ENCODE measurements at regions of chr4 and their contacts with region 1.

Region 1: DNA sequence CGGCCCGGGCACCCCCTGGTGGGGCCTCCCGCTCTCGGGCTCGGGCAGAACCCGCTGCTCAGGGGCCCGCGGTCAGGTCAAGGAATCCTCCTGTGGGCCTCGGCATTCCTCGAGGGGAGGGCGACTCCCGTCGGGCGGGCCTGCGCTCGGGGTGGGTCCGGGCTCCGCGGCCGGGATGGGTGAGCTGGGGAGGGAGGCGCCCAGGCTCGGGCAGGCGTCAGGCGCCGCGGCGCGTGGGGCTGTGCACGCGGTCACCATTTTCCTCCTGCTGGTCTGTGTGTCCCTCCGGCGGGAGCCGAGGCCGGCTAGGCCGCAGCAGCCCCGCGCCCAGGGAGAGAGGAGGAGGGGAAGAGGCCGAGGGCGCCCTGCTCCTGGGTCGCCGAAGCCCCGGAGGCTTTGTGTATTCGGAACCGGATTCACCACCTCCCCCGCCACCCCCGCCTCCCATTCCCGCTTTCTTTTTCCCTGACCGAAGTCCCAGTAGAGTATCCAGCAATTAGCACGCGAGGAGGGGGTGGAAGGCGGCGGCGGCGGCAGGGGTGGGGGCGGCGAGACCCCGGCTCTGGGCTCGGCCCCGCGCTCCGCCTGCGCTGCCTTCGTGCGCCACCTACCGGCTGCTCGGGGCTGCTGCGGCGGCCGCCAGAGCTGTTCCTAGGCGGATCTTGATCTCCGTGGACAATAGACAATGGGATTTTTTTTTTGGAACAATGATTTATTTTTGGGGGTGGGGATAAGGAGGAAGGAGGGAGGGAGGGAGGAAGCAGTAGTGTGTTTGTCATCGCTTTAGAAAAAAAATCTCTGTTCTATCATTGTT is 99.0 kb upstream of the MAML3 start:
- DNase-seq: peak; percentile 63 to 77
- ATAC-seq: peak; percentile 78 to 86
- H3K4me3 ChIP-seq: peak overlapping the region; percentile 44
- H3K27ac ChIP-seq: peak overlapping the region; percentile 94 to 98
- H3K4me1 ChIP-seq: peaks cover 72% of the 10 kb centered on the region
- CTCF ChIP-seq: peak; percentile 85
- EP300 ChIP-seq: no peak
- POLR2A ChIP-seq: no peak
- RAD21 ChIP-seq: peak; percentile 78 to 96

Region 2: DNA sequence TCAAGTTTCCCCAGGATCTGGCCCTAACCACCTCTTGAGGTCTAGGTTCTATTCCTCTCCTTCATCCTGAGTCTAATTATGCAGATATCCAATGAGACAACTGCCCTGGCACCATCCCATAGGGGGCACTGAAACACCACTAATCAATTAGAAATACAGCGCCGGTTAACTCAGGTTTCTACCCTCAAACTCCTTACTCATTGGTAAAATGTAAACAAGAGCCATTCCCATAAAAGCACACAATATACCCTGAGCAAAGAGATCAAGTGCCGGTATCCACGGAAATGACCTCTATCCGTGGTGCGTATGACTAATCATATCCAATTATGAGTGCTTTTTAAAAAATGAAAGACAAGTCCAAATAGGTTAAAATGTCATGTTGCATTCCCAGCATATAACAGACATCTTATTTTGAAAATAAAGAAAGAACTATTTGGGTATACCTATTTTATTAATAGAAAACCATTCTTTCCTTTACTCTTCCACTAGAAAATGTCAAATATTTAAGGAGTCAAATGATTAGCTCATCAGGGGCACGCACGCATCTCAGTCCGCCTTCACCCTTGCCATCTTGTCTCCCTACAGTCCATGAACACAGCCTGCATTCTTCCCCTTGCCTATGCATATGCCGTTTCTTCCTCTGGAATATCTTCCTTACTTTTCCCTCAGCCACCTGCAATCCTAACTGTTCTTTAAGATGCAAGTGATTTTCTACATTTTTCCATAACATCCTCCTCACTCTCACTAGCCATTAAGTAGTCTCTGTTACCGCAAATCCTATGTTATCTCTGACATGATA is 240.1 kb before region 1 on chr4:
- CTCF ChIA-PET with region 1: interaction called, 40 read pairs
- POLR2A ChIA-PET with region 1: interaction called, 8 read pairs
- DNase-seq: peak; percentile 57 to 93
- ATAC-seq: peak; percentile 98
- H3K4me3 ChIP-seq: 0 out of 3 replicates have a peak overlapping the region, but pooled peaks have one; percentile 6
- H3K27ac ChIP-seq: peak overlapping the region; percentile 91 to 92
- H3K4me1 ChIP-seq: peaks cover 47% of the 10 kb centered on the region
- CTCF ChIP-seq: peak; percentile 75
- EP300 ChIP-seq: peak; percentile 66 to 71; a peak in 2 of 5 replicates
- POLR2A ChIP-seq: no peak
- RAD21 ChIP-seq: peak; percentile 92 to 94

Region 3: DNA sequence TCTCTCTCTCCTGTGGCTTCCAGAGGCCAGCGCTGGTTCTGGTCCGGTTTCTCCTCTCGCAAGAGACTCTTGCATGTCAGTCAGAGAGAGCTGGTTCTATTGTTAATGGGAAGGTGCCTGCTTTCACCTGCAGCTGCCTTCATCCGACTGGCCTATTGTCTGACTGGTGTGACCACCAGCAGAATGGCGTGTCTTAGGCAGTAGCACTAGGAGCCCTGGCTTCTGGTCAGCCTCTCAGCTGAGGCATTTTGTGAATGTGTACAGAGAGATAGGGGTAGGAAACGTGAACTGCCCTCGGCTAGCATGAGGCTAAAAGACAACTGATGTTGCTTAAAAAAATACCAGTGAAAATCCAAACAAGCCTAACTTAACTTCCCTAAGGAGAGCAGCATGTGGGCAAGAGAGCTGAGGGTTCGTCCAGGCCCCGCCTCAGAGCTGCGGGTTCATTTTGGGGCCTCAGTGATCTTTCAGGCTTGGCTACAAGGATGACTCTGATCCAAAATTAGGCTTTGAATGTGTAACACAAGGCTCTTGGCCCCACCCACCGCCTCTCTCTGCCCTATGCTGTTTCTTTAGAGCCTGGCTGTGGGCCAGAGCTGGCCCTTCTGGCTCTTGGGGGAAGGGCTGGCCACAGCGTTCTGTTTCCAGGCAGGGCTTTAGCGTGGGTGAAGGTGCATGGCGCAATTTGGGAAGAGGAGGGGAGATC is 14.8 kb before region 1 on chr4:
- CTCF ChIA-PET with region 1: interaction called, 10 read pairs
- POLR2A ChIA-PET with region 1: no interaction called
- DNase-seq: no peak
- ATAC-seq: peak in 1 of 2 experiments; percentile 44; a peak in 2 of 6 replicates
- H3K4me3 ChIP-seq: no peak overlapping the region
- H3K27ac ChIP-seq: peak overlapping the region; percentile 14 to 65; a peak in 3 of 6 replicates
- H3K4me1 ChIP-seq: peaks cover 20% of the 10 kb centered on the region
- CTCF ChIP-seq: no peak
- EP300 ChIP-seq: no peak
- POLR2A ChIP-seq: no peak
- RAD21 ChIP-seq: no peak

Measured in A549 (cell line).